ENCODE measurements at regions of chr2 and their contacts with region 1.

Region 1: DNA sequence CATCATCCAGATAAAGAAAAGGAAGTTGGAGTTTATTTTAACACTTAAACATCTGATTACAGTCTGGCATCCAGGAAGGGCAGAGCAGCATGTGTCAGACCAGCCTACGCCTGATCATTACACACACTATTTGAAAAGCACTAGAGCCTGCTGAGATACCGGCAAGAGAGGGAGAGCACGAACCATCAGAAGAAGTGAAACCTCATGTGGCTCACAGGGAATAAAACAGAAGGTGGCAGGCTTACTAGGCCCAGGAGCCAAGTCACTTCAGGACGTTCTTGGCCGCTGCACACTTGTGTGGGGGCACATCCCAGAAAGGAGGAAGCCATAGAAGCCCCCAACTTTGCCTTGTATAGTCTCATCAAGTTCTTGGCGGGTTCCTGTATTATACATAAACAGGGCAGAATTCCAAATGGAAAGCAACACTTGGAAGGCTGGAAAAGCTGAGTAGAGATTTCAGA is 105.5 kb downstream of the UGGT1 start:
- DNase-seq: no peak
- H3K4me3 ChIP-seq: no peak overlapping the region
- H3K27ac ChIP-seq: no peak overlapping the region
- H3K4me1 ChIP-seq: no peaks in the 10 kb centered on the region
- H3K27me3 ChIP-seq: no peaks in the 10 kb centered on the region
- CTCF ChIP-seq: no peak

Region 2: GRCh38 chr2:128115921-128116623 is 80.4 kb before region 1 on chr2:
- CTCF ChIA-PET with region 1: no interaction called
- POLR2A ChIA-PET with region 1: no interaction called
- intact Hi-C with region 1: no loop called
- DNase-seq: no peak
- H3K4me3 ChIP-seq: no peak overlapping the region
- H3K27ac ChIP-seq: no peak overlapping the region
- H3K4me1 ChIP-seq: no peaks in the 10 kb centered on the region
- H3K27me3 ChIP-seq: no peaks in the 10 kb centered on the region
- CTCF ChIP-seq: no peak

Region 3: DNA sequence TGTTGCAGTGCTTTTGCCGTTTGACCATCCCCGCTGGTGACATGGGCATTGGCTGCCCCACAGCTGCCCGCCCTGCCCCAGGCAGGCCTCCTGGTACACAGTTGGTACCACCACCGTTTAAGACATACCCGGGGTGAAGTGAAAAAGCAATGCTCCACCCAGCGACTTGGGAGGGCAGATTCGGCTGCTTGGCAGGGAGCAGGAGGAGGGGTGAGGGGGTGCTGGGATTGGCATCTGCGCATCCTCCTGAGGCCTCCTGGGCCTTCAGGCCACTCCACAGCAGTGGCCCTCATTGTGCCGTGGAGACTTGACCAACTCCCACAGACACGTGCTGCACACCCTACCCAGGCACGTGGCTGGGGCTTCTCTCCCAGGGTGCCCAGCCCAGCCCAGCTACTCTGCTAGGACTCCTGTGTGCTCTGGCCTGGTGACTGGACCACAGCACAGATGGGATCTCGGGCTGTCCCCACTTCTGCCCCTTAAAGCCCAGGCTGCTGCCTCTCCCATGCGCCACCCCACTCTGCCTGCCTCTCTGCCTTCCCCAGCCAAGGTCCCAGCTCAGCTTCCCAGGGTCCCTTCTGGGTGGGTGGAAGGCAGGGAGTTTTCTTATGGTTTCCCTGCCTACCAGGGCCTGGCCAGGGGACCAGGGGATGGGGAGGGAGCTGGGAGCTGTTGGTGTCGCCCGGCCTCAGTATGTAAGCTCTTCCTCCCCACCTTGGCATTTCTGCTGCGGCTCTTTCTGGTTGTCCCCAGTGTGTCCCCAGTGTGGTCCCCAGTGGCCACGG is 279.1 kb after region 1 on chr2:
- CTCF ChIA-PET with region 1: no interaction called
- POLR2A ChIA-PET with region 1: interaction called, 32 read pairs
- intact Hi-C with region 1: no loop called
- DNase-seq: no peak
- H3K4me3 ChIP-seq: no peak overlapping the region
- H3K27ac ChIP-seq: no peak overlapping the region
- H3K4me1 ChIP-seq: no peaks in the 10 kb centered on the region
- H3K27me3 ChIP-seq: no peaks in the 10 kb centered on the region
- CTCF ChIP-seq: no peak